ENCODE measurements at regions of chrX and their contacts with region 1.

Region 1: DNA sequence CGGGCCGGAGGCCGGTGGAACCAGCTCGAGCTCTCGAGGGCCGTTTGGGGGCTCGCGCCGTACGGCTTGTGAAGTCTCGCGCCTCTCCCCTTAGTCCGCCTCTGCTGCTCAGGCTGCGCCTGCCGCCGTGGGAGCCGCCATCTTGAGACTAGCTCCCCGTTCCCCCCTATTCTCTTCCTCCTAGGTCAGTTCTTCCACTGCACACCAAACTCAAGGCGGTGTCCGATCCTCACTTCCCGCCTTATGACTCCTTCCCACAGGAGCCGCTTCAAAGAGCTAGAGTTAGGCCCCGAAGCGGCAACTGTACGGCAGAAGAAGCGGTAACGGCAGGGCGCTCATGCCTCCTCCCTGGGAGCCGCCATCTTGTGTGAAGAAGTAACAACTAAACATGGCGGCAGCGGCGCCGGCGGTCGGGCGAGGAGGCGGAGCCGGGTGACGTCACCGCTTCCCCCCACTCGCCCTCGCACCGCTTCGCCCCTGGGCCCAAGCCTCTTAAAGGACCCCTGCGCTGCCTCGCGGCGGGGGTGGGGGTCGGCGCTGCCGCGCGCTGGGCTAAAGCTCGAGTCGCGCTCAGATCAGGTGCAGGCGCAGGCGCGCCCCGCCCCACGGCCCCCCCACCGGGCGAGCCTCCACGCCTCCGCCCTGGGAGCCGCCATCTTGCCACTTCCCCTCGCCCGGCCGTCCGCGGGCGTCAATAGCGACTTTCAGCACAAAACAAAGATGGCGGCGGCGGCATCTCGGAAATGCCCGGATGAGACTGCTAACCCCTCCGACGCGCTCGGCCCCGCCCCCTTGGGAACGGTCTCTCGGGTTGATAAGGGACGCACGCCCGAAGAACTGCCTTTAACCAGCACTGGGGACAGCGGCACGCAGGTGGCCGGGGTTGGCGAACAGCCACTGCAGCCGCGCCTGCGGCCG is at the start of gene HCFC1:
- DNase-seq: peak; percentile 81 to 95 (median 90)
- ATAC-seq: peak; percentile 48
- H3K4me3 ChIP-seq: peak within 1 kb of the TSS; percentile 96
- H3K4me3 Mint-ChIP-seq: peak within 1 kb of the TSS; percentile 100
- H3K27ac ChIP-seq: peak within 1 kb of the TSS; percentile 98 to 99
- H3K27ac Mint-ChIP-seq: peak within 1 kb of the TSS; percentile 98
- H3K4me1 ChIP-seq: peaks cover 56% of the 10 kb centered on the region
- H3K4me1 Mint-ChIP-seq: peaks cover 48% of the 10 kb centered on the region
- H3K27me3 ChIP-seq: no peaks in the 10 kb centered on the region
- H3K27me3 Mint-ChIP-seq: no peaks in the 10 kb centered on the region
- CTCF ChIP-seq: no peak
- total RNA-seq, gene HCFC1: 45.9 to 50.2 TPM

Region 2: GRCh38 chrX:153708415-153708814 is 263.3 kb before region 1 on chrX:
- CTCF ChIA-PET with region 1: no interaction called
- POLR2A ChIA-PET with region 1: no interaction called
- intact Hi-C with region 1: no loop called
- DNase-seq: peak in 10 of 14 experiments; percentile 21 to 67 (median 38)
- ATAC-seq: peak; percentile 74
- H3K4me3 ChIP-seq: no peak overlapping the region
- H3K4me3 Mint-ChIP-seq: no peak overlapping the region
- H3K27ac ChIP-seq: no peak overlapping the region
- H3K27ac Mint-ChIP-seq: no peak overlapping the region
- H3K4me1 ChIP-seq: peaks cover 5% of the 10 kb centered on the region
- H3K4me1 Mint-ChIP-seq: peaks cover 13% of the 10 kb centered on the region
- H3K27me3 ChIP-seq: no peaks in the 10 kb centered on the region
- H3K27me3 Mint-ChIP-seq: no peaks in the 10 kb centered on the region
- CTCF ChIP-seq: no peak

Region 3: DNA sequence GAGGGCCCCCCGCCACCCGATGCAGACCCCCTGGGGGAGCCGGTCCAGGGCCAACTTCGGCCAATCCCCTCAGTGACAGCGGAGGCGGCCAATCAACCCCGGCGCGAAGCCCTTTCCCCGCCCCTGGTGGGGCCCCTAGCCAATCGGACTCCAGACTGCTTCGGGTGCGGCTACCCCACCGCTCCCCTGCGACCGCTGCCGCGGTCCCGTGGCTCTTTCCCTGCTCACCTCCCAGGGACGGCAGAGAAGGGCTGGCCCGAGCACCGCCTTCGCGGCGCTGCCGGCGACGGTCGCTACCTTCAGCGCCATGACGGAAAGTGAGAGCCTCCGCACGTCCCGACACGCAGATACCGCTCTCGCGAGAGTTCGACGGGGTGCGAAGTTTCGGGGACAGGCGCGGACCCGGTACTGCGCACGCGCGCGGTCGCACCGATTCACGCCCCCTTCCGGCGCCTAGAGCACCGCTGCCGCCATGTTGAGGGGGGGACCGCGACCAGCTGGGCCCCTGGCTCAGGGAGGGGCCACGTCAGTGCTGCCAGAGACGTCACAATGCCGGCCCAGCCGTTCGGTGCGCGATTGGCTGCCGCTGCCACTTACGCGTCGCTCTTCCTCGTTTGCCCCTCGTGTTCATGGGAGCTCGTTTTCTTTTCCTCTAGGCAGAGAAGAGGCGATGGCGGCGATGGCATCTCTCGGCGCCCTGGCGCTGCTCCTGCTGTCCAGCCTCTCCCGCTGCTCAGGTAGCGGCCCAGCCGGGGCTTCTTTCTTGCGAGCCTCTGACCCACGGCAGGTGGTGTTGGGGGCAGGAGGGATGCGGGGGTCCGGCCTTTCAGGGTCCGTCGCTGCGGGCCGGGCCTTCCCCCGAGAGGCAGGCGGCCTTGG is 177.5 kb before region 1 on chrX and contains the starts of genes IDH3G and SSR4:
- CTCF ChIA-PET with region 1: no interaction called
- POLR2A ChIA-PET with region 1: interaction called, 12 read pairs
- intact Hi-C with region 1: no loop called
- DNase-seq: peak; percentile 84 to 97 (median 91)
- ATAC-seq: peak; percentile 91
- H3K4me3 ChIP-seq: peak within 1 kb of the TSS; percentile 89
- H3K4me3 Mint-ChIP-seq: peak within 1 kb of the TSS; percentile 97
- H3K27ac ChIP-seq: peak within 1 kb of the TSS; percentile 83 to 92
- H3K27ac Mint-ChIP-seq: peak within 1 kb of the TSS; percentile 89
- H3K4me1 ChIP-seq: peaks cover 44% of the 10 kb centered on the region
- H3K4me1 Mint-ChIP-seq: peaks cover 14% of the 10 kb centered on the region
- H3K27me3 ChIP-seq: no peaks in the 10 kb centered on the region
- H3K27me3 Mint-ChIP-seq: no peaks in the 10 kb centered on the region
- CTCF ChIP-seq: no peak
- total RNA-seq, gene IDH3G: 46.8 to 47.3 TPM
- total RNA-seq, gene SSR4: 171 to 173 TPM

Region 4: GRCh38 chrX:153927922-153928760 is 43.6 kb before region 1 on chrX:
- CTCF ChIA-PET with region 1: interaction called, 5 read pairs
- POLR2A ChIA-PET with region 1: interaction called, 163 read pairs
- intact Hi-C with region 1: loop called (anchors 1 to 5 kb)
- DNase-seq: peak; percentile 79 to 98 (median 92)
- ATAC-seq: peak; percentile 72
- H3K4me3 ChIP-seq: peak overlapping the region; percentile 83
- H3K4me3 Mint-ChIP-seq: peak overlapping the region; percentile 96
- H3K27ac ChIP-seq: peak overlapping the region; percentile 93 to 97
- H3K27ac Mint-ChIP-seq: peak overlapping the region; percentile 99
- H3K4me1 ChIP-seq: peaks cover 51% of the 10 kb centered on the region
- H3K4me1 Mint-ChIP-seq: peaks cover 39% of the 10 kb centered on the region
- H3K27me3 ChIP-seq: no peaks in the 10 kb centered on the region
- H3K27me3 Mint-ChIP-seq: no peaks in the 10 kb centered on the region
- CTCF ChIP-seq: no peak

Region 5: DNA sequence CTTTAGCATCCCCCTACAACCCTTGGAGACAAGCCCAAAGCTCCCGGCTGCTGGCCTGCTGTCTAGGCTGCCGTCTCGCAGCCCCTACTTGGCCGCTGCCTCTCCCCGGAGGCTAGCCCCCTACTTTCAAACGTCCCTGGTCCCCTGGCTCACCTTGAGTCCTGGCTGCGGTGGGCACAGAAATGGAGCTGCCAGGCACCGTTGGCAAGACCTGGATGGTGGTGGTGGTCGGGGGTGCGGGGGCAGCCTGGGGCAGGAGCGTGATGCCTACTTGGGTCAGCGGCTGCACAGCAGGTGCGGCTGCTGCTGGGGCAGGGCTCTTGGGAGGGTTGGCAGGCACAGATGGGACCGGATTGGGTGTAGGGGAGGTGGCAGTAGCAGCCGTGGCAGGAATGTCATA is 12.1 kb before region 1 on chrX:
- CTCF ChIA-PET with region 1: no interaction called
- POLR2A ChIA-PET with region 1: no interaction called
- intact Hi-C with region 1: no loop called
- DNase-seq: no peak
- ATAC-seq: no peak
- H3K4me3 ChIP-seq: no peak overlapping the region
- H3K4me3 Mint-ChIP-seq: no peak overlapping the region
- H3K27ac ChIP-seq: no peak overlapping the region
- H3K27ac Mint-ChIP-seq: no peak overlapping the region
- H3K4me1 ChIP-seq: peaks cover 5% of the 10 kb centered on the region
- H3K4me1 Mint-ChIP-seq: no peaks in the 10 kb centered on the region
- H3K27me3 ChIP-seq: no peaks in the 10 kb centered on the region
- H3K27me3 Mint-ChIP-seq: no peaks in the 10 kb centered on the region
- CTCF ChIP-seq: no peak

Region 6: DNA sequence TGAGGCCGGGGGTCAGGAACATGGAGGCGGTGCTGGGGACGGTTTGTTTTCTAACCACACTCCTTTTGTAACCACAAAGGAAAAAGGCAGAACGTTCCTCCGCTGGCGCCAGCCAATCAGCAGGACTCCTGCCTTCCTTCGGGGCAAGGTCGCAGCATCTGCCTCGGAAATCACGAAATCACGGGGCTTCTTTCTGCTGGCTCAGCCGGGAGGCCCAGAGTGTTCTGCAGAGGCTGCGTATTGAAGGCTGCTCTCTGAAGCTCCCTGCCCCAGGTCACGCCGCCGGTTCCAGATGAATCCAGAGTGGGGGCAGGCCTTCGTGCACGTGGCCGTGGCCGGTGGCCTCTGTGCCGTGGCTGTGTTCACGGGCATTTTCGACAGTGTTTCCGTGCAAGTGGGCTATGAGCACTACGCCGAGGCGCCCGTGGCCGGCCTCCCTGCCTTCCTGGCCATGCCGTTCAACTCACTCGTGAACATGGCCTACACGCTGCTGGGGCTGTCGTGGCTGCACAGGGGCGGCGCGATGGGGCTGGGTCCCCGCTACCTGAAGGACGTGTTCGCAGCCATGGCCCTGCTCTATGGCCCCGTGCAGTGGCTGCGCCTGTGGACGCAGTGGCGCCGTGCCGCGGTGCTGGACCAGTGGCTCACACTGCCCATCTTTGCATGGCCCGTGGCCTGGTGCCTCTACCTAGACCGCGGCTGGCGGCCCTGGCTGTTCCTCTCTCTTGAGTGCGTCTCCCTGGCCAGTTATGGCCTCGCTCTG is 10.2 kb after region 1 on chrX:
- CTCF ChIA-PET with region 1: interaction called, 7 read pairs
- POLR2A ChIA-PET with region 1: interaction called, 54 read pairs
- intact Hi-C with region 1: loop called in 1 of 2 experiments (anchors 1 kb)
- DNase-seq: peak; percentile 35 to 86 (median 59)
- ATAC-seq: peak; percentile 45
- H3K4me3 ChIP-seq: peak overlapping the region; percentile 21
- H3K4me3 Mint-ChIP-seq: peak overlapping the region; percentile 73
- H3K27ac ChIP-seq: peak overlapping the region; percentile 64 to 66
- H3K27ac Mint-ChIP-seq: peak overlapping the region; percentile 99
- H3K4me1 ChIP-seq: peaks cover 64% of the 10 kb centered on the region
- H3K4me1 Mint-ChIP-seq: peaks cover 52% of the 10 kb centered on the region
- H3K27me3 ChIP-seq: no peaks in the 10 kb centered on the region
- H3K27me3 Mint-ChIP-seq: no peaks in the 10 kb centered on the region
- CTCF ChIP-seq: no peak

Region 7: GRCh38 chrX:154019633-154020528 is 48.2 kb after region 1 on chrX and contains the start of gene IRAK1:
- CTCF ChIA-PET with region 1: interaction called, 3 read pairs
- POLR2A ChIA-PET with region 1: interaction called, 16 read pairs
- intact Hi-C with region 1: loop called in 1 of 2 experiments (anchors 5 kb)
- DNase-seq: peak in 11 of 14 experiments; percentile 19 to 80 (median 60)
- ATAC-seq: peak; percentile 68
- H3K4me3 ChIP-seq: peak within 1 kb of the TSS; percentile 65
- H3K4me3 Mint-ChIP-seq: peak within 1 kb of the TSS; percentile 92
- H3K27ac ChIP-seq: peak within 1 kb of the TSS; percentile 70
- H3K27ac Mint-ChIP-seq: peak within 1 kb of the TSS; percentile 94
- H3K4me1 ChIP-seq: peaks cover 39% of the 10 kb centered on the region
- H3K4me1 Mint-ChIP-seq: peaks cover 5% of the 10 kb centered on the region
- H3K27me3 ChIP-seq: no peaks in the 10 kb centered on the region
- H3K27me3 Mint-ChIP-seq: no peaks in the 10 kb centered on the region
- CTCF ChIP-seq: no peak
- total RNA-seq, gene IRAK1: 61.2 to 67.4 TPM

Region 8: DNA sequence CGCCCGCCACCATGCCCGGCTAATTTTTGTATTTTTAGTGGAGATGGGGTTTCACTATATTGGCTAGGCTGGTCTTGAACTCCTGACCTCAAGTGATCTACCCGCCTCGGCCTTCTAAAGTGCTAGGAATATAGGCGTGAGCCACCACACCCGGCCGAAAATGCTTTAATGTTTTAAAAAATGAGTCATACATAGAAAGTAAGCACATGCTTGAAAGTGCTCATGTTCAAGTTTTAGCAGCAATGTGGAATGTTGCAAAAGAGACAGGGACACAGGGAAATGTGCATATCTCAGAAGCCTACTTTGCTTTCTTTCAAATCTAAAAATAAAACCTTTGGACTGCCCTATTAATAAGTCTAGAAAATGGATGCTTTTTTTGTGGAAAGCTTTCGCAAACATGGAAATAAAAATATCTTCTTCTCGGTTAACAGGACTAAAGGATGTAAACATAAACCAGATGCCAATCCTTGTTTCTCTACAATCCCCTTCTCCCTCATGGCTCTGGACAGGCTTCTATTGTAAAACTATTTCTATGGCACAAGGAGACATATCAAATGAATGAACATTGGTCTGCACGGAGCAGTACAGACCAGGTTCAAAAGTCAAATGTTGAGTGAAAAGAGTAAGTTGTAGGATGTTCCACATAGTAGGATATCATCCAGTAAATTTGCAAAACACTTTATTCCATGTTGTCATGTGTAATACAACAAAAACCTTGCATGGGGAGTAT is 110.9 kb after region 1 on chrX:
- CTCF ChIA-PET with region 1: no interaction called
- POLR2A ChIA-PET with region 1: no interaction called
- intact Hi-C with region 1: no loop called
- DNase-seq: no peak
- ATAC-seq: no peak
- H3K4me3 ChIP-seq: no peak overlapping the region
- H3K4me3 Mint-ChIP-seq: no peak overlapping the region
- H3K27ac ChIP-seq: peak overlapping the region in 1 of 2 donors; percentile 22
- H3K27ac Mint-ChIP-seq: peak overlapping the region; percentile 78
- H3K4me1 ChIP-seq: peaks cover 24% of the 10 kb centered on the region
- H3K4me1 Mint-ChIP-seq: peaks cover 34% of the 10 kb centered on the region
- H3K27me3 ChIP-seq: no peaks in the 10 kb centered on the region
- H3K27me3 Mint-ChIP-seq: no peaks in the 10 kb centered on the region
- CTCF ChIP-seq: no peak

Region 9: DNA sequence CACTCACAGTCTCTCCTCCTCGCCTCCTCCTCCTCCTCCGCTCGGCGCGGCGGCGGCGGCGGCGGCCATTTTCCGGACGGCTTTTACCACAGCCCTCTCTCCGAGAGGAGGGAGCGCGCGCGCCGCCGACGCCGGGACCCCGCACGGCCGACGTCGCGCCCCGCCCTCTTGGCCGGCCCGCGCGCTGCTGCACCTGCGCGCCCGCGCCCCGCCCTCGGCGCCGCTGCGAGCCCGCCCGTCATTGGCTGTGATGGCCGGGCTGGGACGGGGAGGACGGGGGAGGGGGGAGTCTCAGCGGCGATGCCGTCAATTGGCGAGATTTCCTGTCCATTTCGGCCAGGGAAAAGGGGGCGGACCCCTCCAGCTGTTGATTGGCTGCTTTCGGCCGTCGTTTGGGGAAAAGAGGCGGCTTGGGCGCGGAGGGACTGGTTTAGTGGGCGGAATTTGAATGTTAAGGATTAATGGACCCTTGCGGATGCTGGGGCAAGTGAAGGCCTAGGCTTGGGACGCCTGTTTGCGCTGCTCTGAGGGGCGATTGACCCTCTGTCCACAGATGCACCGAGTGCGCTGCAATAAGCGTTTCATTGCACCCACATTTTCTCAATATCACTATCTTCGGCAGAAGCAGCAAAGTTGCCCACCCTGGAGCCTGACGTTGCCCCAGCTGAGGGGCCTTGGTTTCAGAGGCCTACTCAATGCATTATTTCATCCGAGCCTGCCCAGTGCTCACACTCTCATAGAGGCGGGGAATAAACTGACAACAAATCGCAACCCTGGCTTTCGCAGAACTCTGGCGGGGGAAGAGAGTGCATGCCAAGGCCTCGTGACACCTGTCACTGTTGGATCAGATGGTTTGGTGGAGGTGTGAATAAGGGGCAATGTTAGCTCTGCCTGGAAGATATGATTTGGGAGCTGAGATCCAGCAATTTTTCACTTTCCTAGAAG is 126.2 kb after region 1 on chrX and contains the start of gene MECP2:
- CTCF ChIA-PET with region 1: no interaction called
- POLR2A ChIA-PET with region 1: interaction called, 6 read pairs
- intact Hi-C with region 1: loop called in 1 of 2 experiments (anchors 5 kb)
- DNase-seq: peak; percentile 69 to 94 (median 82)
- ATAC-seq: peak; percentile 86
- H3K4me3 ChIP-seq: peak within 1 kb of the TSS; percentile 90
- H3K4me3 Mint-ChIP-seq: peak within 1 kb of the TSS; percentile 97
- H3K27ac ChIP-seq: peak within 1 kb of the TSS; percentile 80 to 86
- H3K27ac Mint-ChIP-seq: peak within 1 kb of the TSS; percentile 97
- H3K4me1 ChIP-seq: peaks cover 32% of the 10 kb centered on the region
- H3K4me1 Mint-ChIP-seq: peaks cover 39% of the 10 kb centered on the region
- H3K27me3 ChIP-seq: no peaks in the 10 kb centered on the region
- H3K27me3 Mint-ChIP-seq: no peaks in the 10 kb centered on the region
- CTCF ChIP-seq: no peak
- total RNA-seq, gene MECP2: 120 to 133 TPM

Region 10: DNA sequence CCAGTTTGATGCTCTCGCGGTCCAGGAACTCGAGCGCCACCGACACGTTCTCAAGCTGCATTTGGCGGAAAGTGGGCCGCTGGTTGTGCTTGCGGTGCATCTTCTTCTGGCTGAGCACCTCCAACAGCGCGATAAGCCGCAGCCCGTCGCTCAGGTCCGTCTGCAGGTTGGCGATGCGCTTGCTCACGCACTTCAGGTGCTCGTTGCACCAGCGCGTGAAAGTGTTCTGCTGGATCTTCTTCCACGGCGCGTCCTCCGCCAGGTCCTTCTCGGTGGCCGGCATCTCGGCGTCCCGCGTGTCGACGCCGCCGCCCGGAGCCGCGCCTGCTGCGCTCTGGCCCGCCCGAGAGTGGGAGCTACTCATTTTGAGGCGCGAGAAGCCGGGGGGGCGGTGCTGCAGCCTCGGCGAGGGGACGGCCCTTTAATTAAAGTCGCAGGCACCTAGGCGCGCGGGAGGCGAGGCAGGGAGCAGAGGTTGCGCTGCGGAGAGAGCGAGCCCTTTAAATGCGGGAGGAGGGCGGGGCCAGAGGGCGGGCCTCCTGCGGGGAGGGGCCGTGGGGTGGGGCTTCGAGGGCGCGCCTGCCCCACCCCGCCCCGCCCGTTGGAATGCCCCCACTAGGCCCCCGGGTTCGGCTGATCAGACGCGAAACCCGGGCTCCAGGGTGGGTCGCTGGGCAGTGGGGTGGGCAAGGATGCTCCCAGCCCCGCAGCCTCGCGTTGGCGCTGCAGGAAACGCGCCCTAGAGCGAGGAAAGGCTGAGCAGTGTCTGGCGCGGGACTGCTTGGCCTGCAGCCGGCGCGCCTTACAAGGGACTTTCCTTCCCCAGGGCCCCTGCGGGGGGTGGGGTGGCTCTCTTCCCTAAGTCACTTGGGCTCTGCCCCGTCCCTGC is 399.4 kb after region 1 on chrX:
- CTCF ChIA-PET with region 1: no interaction called
- POLR2A ChIA-PET with region 1: interaction called, 4 read pairs
- intact Hi-C with region 1: loop called in 1 of 2 experiments (anchors 2 kb)
- DNase-seq: peak; percentile 84 to 96 (median 90)
- ATAC-seq: peak; percentile 65
- H3K4me3 ChIP-seq: peak overlapping the region; percentile 77
- H3K4me3 Mint-ChIP-seq: peak overlapping the region; percentile 96
- H3K27ac ChIP-seq: peak overlapping the region in 1 of 2 donors; percentile 96
- H3K27ac Mint-ChIP-seq: peak overlapping the region; percentile 80
- H3K4me1 ChIP-seq: peaks cover 59% of the 10 kb centered on the region
- H3K4me1 Mint-ChIP-seq: peaks cover 22% of the 10 kb centered on the region
- H3K27me3 ChIP-seq: no peaks in the 10 kb centered on the region
- H3K27me3 Mint-ChIP-seq: no peaks in the 10 kb centered on the region
- CTCF ChIP-seq: no peak